ENCODE measurements at regions of chr1 and their contacts with region 1.

Region 1: GRCh38 chr1:227234998-227235405 is 83.3 kb downstream of the CDC42BPA start:
- DNase-seq: peak; percentile 53
- H3K4me3 ChIP-seq: no peak overlapping the region
- H3K27ac ChIP-seq: no peak overlapping the region
- H3K4me1 ChIP-seq: no peaks in the 10 kb centered on the region
- CTCF ChIP-seq: peak; percentile 77

Region 2: GRCh38 chr1:226634166-226634588 is 600.8 kb before region 1 on chr1:
- CTCF ChIA-PET with region 1: no interaction called
- POLR2A ChIA-PET with region 1: no interaction called
- intact Hi-C with region 1: loop called (anchors 10 kb)
- DNase-seq: peak; percentile 81
- H3K4me3 ChIP-seq: no peak overlapping the region
- H3K27ac ChIP-seq: no peak overlapping the region
- H3K4me1 ChIP-seq: peaks cover 58% of the 10 kb centered on the region
- CTCF ChIP-seq: peak; percentile 98

Region 3: GRCh38 chr1:227351443-227351842 is 116.4 kb after region 1 on chr1:
- CTCF ChIA-PET with region 1: no interaction called
- POLR2A ChIA-PET with region 1: no interaction called
- intact Hi-C with region 1: no loop called
- DNase-seq: no peak
- H3K4me3 ChIP-seq: no peak overlapping the region
- H3K27ac ChIP-seq: no peak overlapping the region
- H3K4me1 ChIP-seq: no peaks in the 10 kb centered on the region
- CTCF ChIP-seq: no peak

Measured in OCI-LY7 (cell line).